GM10248 (cell line): ENCODE measurements at regions of chr17 and their contacts with region 1.

Region 1: DNA sequence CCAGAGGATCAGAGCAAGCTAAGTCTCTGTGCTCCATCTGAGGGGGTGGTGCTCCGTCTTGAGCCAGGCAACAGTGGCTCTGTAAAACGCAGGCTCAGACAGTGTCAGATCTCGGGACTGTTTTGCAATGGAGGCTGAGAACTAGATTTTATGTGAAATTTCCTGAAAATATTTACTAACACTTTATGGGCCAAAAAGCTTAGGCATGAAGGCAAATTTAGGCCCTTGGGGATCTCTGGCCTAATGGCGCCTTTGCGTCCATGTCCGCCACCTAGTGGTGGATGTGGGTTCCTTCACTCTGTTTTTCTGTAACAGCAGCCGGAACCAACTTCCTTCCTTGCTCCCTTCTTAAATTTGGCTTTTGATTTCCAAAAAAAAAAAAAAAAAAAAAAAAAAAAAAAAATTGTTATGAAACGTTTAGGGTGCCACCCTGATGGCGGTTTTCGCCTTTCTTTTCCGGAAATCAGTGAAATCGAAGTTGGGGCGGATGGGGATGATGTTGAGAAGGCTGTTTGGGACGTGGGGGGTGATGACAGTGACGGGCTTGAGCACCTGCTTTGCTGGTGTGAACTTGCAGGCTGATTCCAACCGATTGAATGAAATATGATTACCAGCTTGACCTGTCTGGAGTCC is 14.0 kb upstream of the ELAC2 start:
- DNase-seq: peak; percentile 64
- CTCF ChIP-seq: peak; percentile 78

Region 2: DNA sequence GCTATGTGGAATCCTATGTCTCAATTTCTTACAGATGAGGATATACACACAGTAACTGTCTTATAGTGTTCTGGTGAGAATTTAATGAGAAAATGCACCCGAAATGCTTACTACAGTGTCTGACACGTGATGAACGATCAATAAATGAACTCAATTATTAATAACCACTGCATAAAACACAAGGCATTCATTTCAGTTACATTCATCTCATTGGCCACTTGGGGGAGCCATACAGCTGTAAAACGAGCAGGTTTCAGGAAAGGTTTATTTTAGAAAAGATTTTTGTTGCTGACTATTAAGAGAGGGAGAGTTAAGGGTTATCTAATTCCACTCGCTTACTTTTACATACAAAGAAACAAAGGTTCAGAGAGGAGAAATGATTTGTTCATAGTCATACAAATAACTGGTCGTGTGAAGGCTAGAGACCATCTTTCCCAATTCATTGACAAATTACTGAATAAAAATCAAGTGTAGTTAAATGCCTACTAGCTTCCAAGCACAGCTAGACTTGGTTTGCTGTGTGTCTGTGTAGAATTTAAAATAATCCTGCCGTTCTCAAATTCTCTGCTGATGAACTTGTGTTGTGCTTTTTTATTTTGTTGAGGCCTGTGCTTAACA is 851.1 kb before region 1 on chr17:
- CTCF ChIA-PET with region 1: interaction called, 10 read pairs
- POLR2A ChIA-PET with region 1: no interaction called
- DNase-seq: peak; percentile 45
- CTCF ChIP-seq: peak; percentile 83

Region 3: DNA sequence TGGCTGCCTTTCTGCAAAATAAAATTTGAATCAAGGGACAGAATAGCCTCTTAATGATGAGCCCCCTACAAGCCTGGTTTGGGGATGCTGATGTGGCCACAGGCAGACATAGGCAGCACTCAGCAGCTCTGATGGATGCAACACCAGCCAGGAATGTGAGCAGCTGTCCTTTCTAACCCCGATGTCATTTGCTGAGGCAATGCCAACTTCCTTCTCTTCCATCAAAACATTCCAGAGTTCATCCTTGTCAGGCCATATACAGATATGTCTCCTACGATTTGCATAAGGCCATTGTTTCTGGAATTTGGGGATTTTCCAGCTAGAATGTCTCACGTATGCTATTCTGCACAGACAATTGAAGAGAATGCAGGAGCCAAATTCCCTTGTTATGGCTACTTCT is 418.3 kb before region 1 on chr17:
- CTCF ChIA-PET with region 1: no interaction called
- POLR2A ChIA-PET with region 1: no interaction called
- DNase-seq: no peak
- CTCF ChIP-seq: no peak

Region 4: DNA sequence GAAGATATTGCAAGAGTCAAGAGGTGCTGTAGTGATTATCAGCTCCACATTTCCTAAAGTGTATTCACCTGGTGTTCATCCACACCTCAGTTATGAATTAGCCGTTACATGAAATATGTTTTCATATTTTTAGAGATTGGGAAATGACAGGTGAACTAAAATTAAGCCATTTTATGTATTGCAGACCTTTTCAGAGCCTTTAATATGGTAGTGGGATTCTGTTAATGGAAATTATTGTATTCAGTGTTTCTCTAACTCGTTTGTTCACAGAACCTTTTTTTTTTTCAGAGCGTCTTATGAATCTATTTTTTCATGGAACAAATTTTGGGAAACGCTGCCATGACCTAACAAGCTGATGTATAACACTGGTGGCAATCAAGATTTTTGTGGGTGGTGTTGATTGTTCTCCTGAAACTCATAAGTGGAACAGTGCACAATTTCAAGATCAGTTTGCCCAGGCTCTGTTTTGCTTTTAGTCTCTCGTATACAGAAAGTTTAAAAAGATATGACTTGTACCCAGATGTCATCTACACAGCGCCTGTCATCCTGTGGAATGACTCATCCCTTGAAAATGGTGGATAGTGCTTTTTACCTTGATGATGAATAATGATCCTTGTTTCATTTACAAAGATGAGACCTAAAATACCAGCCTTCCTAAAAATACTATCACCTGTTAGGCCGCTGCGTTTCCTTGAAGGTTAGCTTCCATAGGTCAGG is 153.7 kb before region 1 on chr17:
- CTCF ChIA-PET with region 1: no interaction called
- POLR2A ChIA-PET with region 1: no interaction called
- DNase-seq: no peak
- CTCF ChIP-seq: no peak

Region 5: GRCh38 chr17:12995896-12996295 is 35.9 kb before region 1 on chr17:
- CTCF ChIA-PET with region 1: interaction called, 17 read pairs
- POLR2A ChIA-PET with region 1: no interaction called
- DNase-seq: no peak
- CTCF ChIP-seq: no peak

Region 6: DNA sequence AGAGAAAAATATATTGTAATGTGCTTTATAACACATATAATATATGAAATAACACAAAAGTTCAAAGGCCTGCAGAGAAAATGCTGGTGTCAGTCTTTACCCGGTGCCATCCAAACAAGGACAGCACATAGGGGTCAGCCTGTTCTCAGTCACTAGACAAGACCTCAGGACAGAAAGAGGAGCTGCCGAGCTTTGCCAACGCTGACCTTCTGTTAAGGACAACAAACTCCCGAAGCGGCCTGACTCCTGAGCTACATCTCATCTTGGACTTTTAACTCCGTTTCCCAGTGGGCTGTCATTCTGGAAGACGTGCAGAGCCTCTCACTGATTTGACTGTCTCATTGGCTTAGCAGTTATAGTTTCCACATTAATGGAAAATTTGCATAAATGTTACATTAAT is 20.9 kb before region 1 on chr17:
- CTCF ChIA-PET with region 1: interaction called, 32 read pairs
- POLR2A ChIA-PET with region 1: no interaction called
- DNase-seq: no peak
- CTCF ChIP-seq: no peak

Region 7: DNA sequence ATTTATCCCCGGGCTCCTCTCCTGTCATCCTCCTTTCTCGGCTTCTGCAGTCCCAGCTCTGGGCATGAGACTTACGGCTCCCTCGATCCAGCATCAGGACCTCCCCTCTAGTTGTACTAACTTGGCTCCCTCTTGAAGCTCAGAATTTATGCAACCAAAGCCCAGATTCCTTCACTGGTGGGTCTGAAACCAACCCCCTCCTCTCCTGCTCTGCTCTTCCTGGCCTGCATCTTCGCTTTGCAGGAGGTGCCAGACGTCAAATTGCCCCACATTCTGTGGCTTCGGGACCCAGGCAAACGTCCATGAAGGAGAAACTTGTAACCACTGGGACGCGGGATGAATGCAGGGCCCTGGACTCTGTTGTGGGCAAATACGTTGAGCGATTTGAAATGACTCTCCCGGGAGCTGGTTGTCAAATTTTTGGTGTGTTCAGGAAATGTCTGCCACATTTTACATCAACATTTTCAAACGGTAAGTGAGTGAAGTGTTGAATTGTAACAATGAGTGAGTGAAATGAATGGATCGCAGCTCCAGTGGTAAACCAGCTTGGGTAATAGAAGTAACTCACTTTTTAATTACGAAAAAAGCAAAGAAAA is 15.3 kb after region 1 on chr17:
- CTCF ChIA-PET with region 1: interaction called, 53 read pairs
- POLR2A ChIA-PET with region 1: no interaction called
- DNase-seq: no peak
- CTCF ChIP-seq: no peak

Region 8: DNA sequence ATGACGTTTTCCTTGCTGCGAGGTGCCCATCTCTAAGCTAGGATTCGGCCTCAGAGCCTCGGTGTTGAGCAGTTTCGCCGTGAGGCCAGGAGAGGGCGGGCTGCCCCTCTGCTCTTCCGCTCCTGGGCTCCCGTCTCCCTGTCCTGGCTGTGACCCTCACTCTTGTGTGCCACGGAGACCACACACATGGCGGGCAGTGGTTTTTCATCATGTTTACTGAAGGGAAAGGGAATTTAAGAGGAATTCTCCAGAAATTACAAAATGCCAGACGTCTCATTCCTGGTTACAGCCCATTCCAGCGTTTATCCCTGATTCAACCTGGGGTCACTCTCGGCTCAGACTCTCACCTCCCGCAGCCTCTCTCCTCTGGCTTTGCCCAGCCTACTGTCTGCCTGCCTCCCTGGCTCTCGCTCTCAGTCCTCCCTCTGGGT is 82.8 kb after region 1 on chr17:
- CTCF ChIA-PET with region 1: interaction called, 10 read pairs
- POLR2A ChIA-PET with region 1: no interaction called
- DNase-seq: peak; percentile 27
- CTCF ChIP-seq: peak; percentile 52

Region 9: GRCh38 chr17:13153036-13153435 is 121.2 kb after region 1 on chr17:
- CTCF ChIA-PET with region 1: no interaction called
- POLR2A ChIA-PET with region 1: no interaction called
- DNase-seq: no peak
- CTCF ChIP-seq: no peak